GM13976 (cell line): ENCODE measurements at regions of chr3 and their contacts with region 1.

Region 1: DNA sequence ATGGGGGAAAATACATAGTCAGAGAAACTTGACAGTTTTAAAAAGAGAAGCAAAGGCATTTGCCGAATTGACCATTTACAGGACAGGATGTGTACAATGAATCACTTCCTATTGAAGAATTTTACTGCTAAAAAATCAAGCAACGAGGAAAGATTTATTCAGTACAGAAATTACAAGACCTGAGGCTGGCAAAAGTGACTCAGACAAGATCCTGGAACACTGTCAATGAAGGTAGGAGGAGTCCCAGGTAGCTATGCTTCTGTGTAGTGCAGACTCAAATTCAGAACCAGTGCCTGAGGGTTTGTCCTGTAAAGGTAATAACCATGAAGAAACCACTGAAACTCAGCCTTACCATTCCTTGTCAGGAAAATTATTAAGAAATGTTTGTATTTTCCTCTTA is 120.9 kb downstream of the ZMAT3 start:
- DNase-seq: no peak
- CTCF ChIP-seq: no peak

Region 2: DNA sequence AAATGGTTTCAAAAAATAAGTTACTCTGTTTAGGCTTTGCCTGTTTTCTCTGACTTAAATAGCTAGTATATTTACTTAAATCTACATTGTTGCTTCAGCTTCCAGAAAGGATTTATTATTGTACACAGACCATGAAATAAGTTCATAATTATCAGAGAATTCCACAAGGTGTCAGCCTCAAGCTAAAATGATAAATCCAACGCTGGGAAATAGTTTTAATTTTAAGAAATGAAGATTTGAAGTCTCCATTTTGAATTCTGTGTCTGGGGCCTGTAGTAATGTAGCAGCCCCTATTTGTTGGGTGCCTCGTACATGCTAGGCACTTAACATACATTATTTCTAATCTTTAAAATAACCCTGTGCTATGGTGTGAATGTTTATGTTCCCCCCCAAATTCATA is 507.0 kb before region 1 on chr3:
- in situ Hi-C with region 1: loop called (anchors 10 kb)
- DNase-seq: no peak
- CTCF ChIP-seq: no peak